Caco-2 (cell line): ENCODE measurements at regions of chr22 and their contacts with region 1.

Region 1: DNA sequence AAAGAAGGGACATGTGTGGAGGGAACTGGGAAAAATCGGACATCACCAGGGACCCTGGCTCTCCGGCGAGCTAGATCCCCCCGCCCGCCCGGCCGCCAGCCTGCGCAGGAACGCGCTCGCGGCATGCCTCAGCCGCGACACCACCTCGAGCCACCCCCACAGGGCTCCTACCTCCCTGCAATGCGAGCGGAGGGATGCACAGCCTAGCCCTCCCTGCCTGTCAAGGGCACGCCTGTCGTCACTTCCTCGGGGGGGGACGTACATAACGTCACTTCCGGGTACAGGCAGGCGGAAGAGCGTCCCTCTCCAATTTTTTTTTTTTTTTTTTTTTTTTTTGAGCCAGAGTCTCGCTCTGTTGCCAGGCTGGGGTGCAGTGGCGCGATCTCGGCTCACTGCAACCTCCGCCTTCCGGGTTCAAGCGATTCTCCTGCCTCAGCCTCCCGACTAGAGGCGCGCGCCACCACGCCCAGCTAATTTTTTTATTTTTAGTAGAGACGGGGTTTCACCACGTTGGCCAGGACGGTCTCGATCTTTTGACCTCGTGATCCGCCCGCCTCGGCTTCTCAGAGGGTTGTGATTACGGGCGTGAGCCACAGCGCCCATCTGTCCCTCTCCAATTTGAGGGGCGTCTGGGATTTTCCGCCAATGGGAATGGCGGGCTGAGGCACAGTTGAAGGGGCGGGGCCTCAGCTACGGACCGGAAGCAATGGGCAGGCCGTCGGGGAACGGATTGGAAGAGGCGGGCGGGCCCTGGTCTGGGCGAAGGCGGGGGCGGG is at the start of gene TXN2:
- DNase-seq: peak; percentile 96 to 97
- H3K4me3 ChIP-seq: peak within 1 kb of the TSS; percentile 84
- H3K4me3 Mint-ChIP-seq: peak within 1 kb of the TSS; percentile 91
- H3K27ac Mint-ChIP-seq: peak within 1 kb of the TSS; percentile 81
- H3K4me1 ChIP-seq: peaks cover 20% of the 10 kb centered on the region
- H3K4me1 Mint-ChIP-seq: peaks cover 17% of the 10 kb centered on the region
- H3K27me3 ChIP-seq: no peaks in the 10 kb centered on the region
- H3K27me3 Mint-ChIP-seq: no peaks in the 10 kb centered on the region
- CTCF ChIP-seq: no peak
- total RNA-seq, gene TXN2: 75.8 and 77.2 TPM in 2 replicates

Region 2: DNA sequence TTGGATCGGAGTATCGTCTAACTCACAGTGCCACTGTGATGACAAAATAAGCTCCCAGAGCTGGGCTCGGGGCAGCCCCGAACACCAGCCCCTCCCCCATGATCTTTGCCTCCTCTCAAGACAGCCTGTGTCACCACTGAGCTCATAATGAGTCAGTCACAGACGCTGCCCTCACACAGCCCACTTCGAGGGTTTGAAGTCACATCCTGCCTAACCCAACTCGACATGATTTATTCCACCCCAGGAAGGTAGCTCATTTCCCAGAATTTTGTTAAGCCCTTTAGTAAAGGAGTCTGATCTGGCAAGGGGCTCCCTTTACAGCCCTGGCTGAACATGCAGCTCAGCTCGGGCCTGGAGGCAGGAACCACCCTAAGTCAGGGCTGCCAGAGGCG is 116.6 kb before region 1 on chr22:
- CTCF ChIA-PET with region 1: no interaction called
- POLR2A ChIA-PET with region 1: no interaction called
- intact Hi-C with region 1: no loop called
- DNase-seq: peak in 1 of 2 experiments; percentile 37
- H3K4me3 ChIP-seq: no peak overlapping the region
- H3K4me3 Mint-ChIP-seq: peak overlapping the region; percentile 42
- H3K27ac Mint-ChIP-seq: peak overlapping the region; percentile 94
- H3K4me1 ChIP-seq: peaks cover 95% of the 10 kb centered on the region
- H3K4me1 Mint-ChIP-seq: peaks cover 63% of the 10 kb centered on the region
- H3K27me3 ChIP-seq: no peaks in the 10 kb centered on the region
- H3K27me3 Mint-ChIP-seq: no peaks in the 10 kb centered on the region
- CTCF ChIP-seq: no peak

Region 3: GRCh38 chr22:36397131-36398093 is 84.2 kb before region 1 on chr22:
- CTCF ChIA-PET with region 1: no interaction called
- POLR2A ChIA-PET with region 1: no interaction called
- intact Hi-C with region 1: no loop called
- DNase-seq: peak; percentile 67 to 75
- H3K4me3 ChIP-seq: no peak overlapping the region
- H3K4me3 Mint-ChIP-seq: peak overlapping the region; percentile 47
- H3K27ac Mint-ChIP-seq: peak overlapping the region; percentile 93
- H3K4me1 ChIP-seq: peaks cover 51% of the 10 kb centered on the region
- H3K4me1 Mint-ChIP-seq: peaks cover 44% of the 10 kb centered on the region
- H3K27me3 ChIP-seq: no peaks in the 10 kb centered on the region
- H3K27me3 Mint-ChIP-seq: no peaks in the 10 kb centered on the region
- CTCF ChIP-seq: no peak

Region 4: DNA sequence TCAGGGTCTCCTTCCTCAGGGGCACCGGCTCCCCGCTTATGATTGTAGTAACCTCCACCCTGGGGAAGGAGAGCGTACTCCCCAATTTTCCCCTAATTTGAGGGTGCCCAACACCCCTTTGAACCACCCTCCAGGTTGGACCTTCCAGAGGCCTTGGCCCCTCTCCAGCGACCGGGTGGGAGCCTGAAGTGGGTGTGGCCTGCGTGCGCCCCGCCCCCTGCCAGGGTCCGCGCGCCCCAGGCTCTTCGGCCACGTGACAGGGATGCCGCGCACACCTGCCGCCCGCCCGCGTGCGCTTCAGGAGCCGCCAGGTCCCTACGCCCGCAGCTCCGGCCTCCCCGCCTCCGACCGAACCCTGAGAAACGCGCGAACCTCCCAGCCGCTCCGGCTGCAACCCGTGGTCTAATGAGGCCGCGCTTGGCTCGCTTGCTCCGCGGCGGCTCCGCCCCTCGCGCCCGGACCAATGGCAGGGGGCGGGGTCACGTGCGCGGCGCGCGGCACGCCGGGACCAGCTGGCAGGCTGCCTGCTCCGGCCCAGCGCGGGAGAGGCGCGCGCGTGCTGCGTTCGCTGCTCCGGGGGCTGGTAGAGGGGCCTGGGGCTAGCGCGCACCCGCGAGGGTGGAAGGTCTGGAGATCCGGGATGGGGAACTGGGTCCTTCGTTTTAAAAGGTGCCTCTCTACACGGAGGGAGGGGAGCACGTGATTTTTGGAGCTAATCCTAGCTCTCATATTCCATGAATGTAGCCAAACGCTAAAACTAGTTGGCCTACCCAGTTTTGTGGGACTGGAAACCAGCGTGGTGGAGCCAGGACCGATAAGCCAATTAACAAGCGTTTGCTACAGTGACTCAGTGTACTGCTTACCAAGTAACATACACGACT is 25.3 kb after region 1 on chr22 and contains the start of gene FOXRED2:
- CTCF ChIA-PET with region 1: interaction called, 5 read pairs
- POLR2A ChIA-PET with region 1: interaction called, 3 read pairs
- intact Hi-C with region 1: loop called (anchors 2 kb)
- DNase-seq: peak; percentile 94 to 97
- H3K4me3 ChIP-seq: peak within 1 kb of the TSS; percentile 85
- H3K4me3 Mint-ChIP-seq: peak within 1 kb of the TSS; percentile 70
- H3K27ac Mint-ChIP-seq: peak within 1 kb of the TSS; percentile 78
- H3K4me1 ChIP-seq: peaks cover 22% of the 10 kb centered on the region
- H3K4me1 Mint-ChIP-seq: peaks cover 13% of the 10 kb centered on the region
- H3K27me3 ChIP-seq: no peaks in the 10 kb centered on the region
- H3K27me3 Mint-ChIP-seq: no peaks in the 10 kb centered on the region
- CTCF ChIP-seq: no peak
- total RNA-seq, gene FOXRED2: 182 and 220 TPM in 2 replicates

Region 5: DNA sequence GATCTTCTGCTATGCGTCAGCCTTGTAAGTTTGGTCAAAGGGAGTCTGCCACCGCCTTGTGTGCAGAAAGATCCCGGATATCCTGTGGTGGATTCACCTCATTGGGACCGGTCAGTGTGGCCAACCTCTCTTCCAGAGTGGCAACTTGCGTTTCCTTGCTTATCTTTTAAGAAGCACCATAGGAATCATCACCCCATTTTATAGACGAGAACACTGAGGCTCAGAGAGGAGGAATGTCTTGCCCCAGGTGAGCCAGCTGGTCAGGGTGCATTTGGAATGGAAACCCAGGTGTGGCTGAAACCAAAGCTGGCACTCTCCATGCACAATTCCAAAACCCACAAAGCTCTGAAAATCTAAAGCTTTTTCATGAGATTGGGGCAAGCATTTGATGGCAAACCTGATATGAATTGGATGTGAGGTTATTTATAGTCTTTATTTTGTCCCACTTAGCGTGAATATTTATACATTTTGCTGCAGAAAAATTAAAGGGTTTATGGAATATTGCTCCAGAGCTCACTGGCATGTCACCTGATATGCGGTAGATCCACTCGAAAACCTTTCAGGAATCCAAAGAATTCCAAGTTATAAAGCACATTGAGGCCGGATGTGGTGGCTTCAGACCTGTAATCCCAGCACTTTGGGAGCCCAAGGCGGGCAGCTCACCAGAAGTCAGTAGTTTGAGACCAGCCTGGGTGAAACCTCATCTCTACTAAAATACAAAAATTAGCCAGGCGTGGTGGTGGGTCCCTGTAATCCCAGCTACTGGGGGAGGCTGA is 59.5 kb after region 1 on chr22:
- CTCF ChIA-PET with region 1: no interaction called
- POLR2A ChIA-PET with region 1: interaction called, 10 read pairs
- intact Hi-C with region 1: no loop called
- DNase-seq: peak in 1 of 2 experiments; percentile 10
- H3K4me3 ChIP-seq: no peak overlapping the region
- H3K4me3 Mint-ChIP-seq: no peak overlapping the region
- H3K27ac Mint-ChIP-seq: no peak overlapping the region
- H3K4me1 ChIP-seq: peaks cover 8% of the 10 kb centered on the region
- H3K4me1 Mint-ChIP-seq: peaks cover 2% of the 10 kb centered on the region
- H3K27me3 ChIP-seq: no peaks in the 10 kb centered on the region
- H3K27me3 Mint-ChIP-seq: no peaks in the 10 kb centered on the region
- CTCF ChIP-seq: no peak